Activated naive CD8-positive, alpha-beta T cell treated with anti-CD3 and anti-CD28 coated beads, Interleukin-2, amount 10 ng/mL, durations not matched to agents 7 days and 5 days (primary cell): ENCODE measurements at regions of chr6 and their contacts with region 1.

Region 1: GRCh38 chr6:63573140-63573898 is 1.0 kb downstream of the LOC128125822 start:
- DNase-seq: peak; percentile 82
- ATAC-seq: peak; percentile 41
- H3K4me3 Mint-ChIP-seq: peak overlapping the region; percentile 97
- H3K27ac Mint-ChIP-seq: peak overlapping the region; percentile 97
- H3K4me1 Mint-ChIP-seq: peaks cover 30% of the 10 kb centered on the region
- H3K27me3 Mint-ChIP-seq: no peaks in the 10 kb centered on the region

Region 2: DNA sequence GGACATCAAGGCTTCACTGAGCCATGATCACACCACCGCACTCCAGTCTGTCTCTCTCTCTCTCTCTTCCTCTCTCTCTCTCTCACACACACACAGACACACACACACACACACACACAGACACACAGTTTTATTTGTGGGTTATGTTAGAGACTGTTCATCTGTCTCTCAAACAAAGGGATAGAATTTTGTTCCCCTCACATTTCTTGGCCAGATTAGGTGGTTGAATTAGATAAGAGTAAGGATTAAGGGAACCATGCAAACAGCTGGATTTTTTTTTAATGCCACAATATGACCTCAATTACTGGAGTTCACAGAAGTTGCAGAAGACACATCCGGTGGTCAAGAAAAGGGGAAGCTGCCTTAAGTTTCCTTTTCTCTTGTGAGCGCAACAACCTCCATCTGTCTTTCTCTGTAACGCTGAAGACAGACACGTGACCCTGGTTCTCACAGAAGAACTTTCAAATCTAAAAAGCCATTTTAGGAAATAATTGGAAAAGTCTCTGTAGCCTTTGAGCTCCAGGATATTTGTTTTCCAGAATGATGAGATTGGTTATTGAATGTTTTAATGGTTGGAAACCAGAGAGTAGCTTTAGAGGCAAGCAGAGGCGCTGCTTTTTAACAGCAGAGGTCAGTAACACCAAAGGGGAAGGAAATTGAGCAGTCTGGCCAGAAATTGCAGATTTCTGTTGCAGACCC is 220.6 kb before region 1 on chr6:
- POLR2A ChIA-PET with region 1: interaction called, 14 read pairs
- DNase-seq: peak; percentile 31
- ATAC-seq: peak; percentile 71
- H3K4me3 Mint-ChIP-seq: peak overlapping the region; percentile 70
- H3K27ac Mint-ChIP-seq: peak overlapping the region; percentile 82
- H3K4me1 Mint-ChIP-seq: peaks cover 26% of the 10 kb centered on the region
- H3K27me3 Mint-ChIP-seq: peaks cover 22% of the 10 kb centered on the region

Region 3: GRCh38 chr6:63635588-63636517 is 62.5 kb after region 1 on chr6 and contains the start of gene PHF3:
- POLR2A ChIA-PET with region 1: interaction called, 19 read pairs
- DNase-seq: peak; percentile 92
- ATAC-seq: peak; percentile 95
- H3K4me3 Mint-ChIP-seq: peak within 1 kb of the TSS; percentile 98
- H3K27ac Mint-ChIP-seq: peak within 1 kb of the TSS; percentile 99
- H3K4me1 Mint-ChIP-seq: peaks cover 33% of the 10 kb centered on the region
- H3K27me3 Mint-ChIP-seq: no peaks in the 10 kb centered on the region
- total RNA-seq, gene PHF3: 66.2 to 69.5 TPM